Activated CD4-positive, alpha-beta T cell treated with anti-CD3 and anti-CD28 coated beads, Interleukin-2, amount 10 ng/mL, durations not matched to agents 24 days and 14 days (primary cell): ENCODE measurements at regions of chr1 and their contacts with region 1.

Region 1: GRCh38 chr1:200302192-200302920 is 107.5 kb downstream of the ZNF281 start:
- DNase-seq: peak; percentile 90
- H3K4me3 Mint-ChIP-seq: peak overlapping the region; percentile 86
- H3K27ac Mint-ChIP-seq: peak overlapping the region; percentile 17
- H3K4me1 Mint-ChIP-seq: peaks cover 20% of the 10 kb centered on the region
- H3K27me3 Mint-ChIP-seq: peaks cover 38% of the 10 kb centered on the region

Region 2: DNA sequence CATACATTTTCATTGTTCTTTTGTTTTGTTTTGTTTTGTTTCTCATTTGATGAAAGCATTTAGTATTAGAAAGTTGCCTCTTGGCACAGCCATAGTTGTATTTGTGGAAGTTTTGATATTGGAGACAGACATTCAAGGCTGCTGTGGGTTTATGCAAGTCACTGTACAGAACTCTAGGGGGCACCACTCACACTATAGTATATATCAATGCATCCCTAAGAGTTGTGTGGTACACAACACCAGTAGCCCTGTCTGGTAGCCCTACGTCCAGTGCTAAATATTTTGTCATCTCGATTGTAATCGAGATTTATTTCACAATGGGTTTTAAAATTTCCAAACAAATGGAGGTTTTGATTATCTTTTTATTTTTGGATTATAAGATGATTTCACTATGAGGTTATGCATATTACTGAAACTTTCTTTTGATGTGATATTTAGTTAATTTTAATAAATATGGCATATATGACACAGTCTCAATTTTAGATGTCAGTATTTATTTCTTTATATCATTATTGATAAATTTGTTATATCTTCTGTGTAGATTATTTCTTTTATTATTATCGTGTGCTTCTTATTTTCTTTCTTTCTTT is 162.6 kb before region 1 on chr1:
- intact Hi-C with region 1: loop called (anchors 2 kb)
- DNase-seq: peak; percentile 79
- H3K4me3 Mint-ChIP-seq: no peak overlapping the region
- H3K27ac Mint-ChIP-seq: no peak overlapping the region
- H3K4me1 Mint-ChIP-seq: peaks cover 5% of the 10 kb centered on the region
- H3K27me3 Mint-ChIP-seq: peaks cover 9% of the 10 kb centered on the region

Region 3: DNA sequence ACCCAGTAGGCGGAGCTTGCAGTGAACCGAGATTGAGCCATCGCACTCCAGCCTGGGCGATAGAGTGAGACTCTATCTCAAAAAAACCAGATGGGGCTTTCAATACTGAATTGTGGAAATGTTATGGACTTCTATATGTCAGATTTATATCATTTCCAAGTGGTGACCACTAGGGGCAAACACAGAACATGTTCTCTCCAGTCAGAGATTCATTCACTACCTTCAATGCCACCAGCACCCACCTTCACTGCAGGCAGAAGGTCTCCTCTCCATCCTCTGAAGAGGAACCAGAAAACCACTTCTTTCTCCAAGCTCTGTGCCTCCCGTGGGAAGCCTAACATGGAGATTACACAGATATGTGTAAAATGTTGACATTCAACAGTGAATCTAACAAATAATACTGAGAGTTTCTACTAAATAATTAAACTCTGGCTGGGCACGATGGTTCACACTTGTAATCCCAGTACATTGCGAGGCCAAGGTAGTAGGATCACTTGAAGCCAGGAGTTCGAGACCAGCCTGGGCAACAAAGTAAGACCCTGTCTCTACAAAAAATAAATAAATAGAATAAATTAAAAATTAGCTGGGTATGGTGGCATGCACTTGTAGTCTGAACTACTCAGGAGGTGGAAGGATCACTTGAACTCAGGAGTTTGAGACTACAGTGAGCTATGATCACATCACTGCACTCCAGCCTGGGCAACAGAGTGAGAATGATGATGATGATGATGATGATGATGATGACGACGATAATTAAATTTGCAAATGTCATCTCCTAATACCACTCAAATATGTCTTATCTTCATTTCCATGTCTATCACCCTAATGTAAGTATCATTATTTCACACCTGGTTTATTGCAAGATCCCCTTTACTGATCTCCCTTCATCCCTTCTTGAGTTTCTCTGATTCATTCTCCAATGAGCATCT is 43.6 kb before region 1 on chr1:
- intact Hi-C with region 1: loop called (anchors 5 kb)
- DNase-seq: no peak
- H3K4me3 Mint-ChIP-seq: no peak overlapping the region
- H3K27ac Mint-ChIP-seq: no peak overlapping the region
- H3K4me1 Mint-ChIP-seq: peaks cover 11% of the 10 kb centered on the region
- H3K27me3 Mint-ChIP-seq: peaks cover 13% of the 10 kb centered on the region

Region 4: GRCh38 chr1:200409761-200410565 is 107.6 kb after region 1 on chr1 and contains the start of gene ZNF281:
- intact Hi-C with region 1: loop called (anchors 2 kb)
- DNase-seq: peak; percentile 98
- H3K4me3 Mint-ChIP-seq: peak within 1 kb of the TSS; percentile 90
- H3K27ac Mint-ChIP-seq: peak within 1 kb of the TSS; percentile 95
- H3K4me1 Mint-ChIP-seq: peaks cover 50% of the 10 kb centered on the region
- H3K27me3 Mint-ChIP-seq: peaks cover 8% of the 10 kb centered on the region
- total RNA-seq, gene ZNF281: 19.0 and 20.4 TPM in 2 replicates

Region 5: GRCh38 chr1:200453553-200453905 is 151.2 kb after region 1 on chr1:
- intact Hi-C with region 1: no loop called
- DNase-seq: no peak
- H3K4me3 Mint-ChIP-seq: no peak overlapping the region
- H3K27ac Mint-ChIP-seq: no peak overlapping the region
- H3K4me1 Mint-ChIP-seq: peaks cover 12% of the 10 kb centered on the region
- H3K27me3 Mint-ChIP-seq: no peaks in the 10 kb centered on the region